Activated T-helper 1 cell treated with anti-CD3 and anti-CD28 coated beads, Interleukin-12 subunit alpha, Interleukin-12 subunit beta, Interleukin-2, Interleukin-4 antibody, amounts not matched to agents 30 ng/mL and 10 ng/mL and 1 ng/mL, durations not matched to agents 14 hours and 24 hours and 36 hours (primary cell): ENCODE measurements at regions of chr11 and their contacts with region 1.

Region 1: DNA sequence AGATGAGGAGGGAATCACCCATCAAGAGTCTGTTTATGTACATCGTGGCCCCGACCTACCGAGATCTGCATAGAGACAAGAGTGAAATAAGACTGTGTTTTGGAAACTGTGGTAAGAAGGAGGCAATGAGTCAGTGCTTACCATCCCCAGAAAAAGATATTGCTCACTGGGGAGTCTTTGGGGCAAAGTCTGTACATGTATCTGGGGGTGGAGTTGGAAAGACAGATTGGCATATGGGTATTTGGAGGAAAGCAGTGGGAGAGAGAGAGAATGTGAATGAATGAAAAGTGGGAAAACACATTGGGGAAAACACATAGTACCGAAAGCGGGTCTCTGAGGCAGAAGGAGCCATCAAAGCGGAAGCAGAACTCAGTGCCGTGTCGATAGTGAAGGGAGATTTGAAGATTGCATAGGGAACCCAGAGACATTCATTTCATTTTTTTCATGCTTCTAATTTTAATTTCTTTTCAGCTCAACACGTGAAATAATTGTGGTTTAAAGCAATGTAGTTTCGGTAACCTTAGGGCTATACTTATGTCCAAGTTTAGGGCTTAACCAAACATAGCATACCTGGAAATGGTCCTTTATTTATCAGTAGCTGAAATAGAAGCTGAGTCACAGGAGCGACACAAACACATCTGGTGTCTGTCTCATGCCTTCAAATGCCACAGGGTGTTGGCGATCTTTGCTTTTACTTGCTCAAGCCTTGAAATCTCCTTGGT is 98.6 kb upstream of the CD44 start:
- DNase-seq: peak; percentile 70
- H3K4me3 Mint-ChIP-seq: peak overlapping the region; percentile 72
- H3K27ac Mint-ChIP-seq: peak overlapping the region; percentile 93
- H3K4me1 Mint-ChIP-seq: peaks cover 66% of the 10 kb centered on the region
- H3K27me3 Mint-ChIP-seq: peaks cover 2% of the 10 kb centered on the region

Region 2: GRCh38 chr11:34653826-34654490 is 386.4 kb before region 1 on chr11:
- intact Hi-C with region 1: loop called (anchors 1 kb)
- DNase-seq: no peak
- H3K4me3 Mint-ChIP-seq: no peak overlapping the region
- H3K27ac Mint-ChIP-seq: no peak overlapping the region
- H3K4me1 Mint-ChIP-seq: peaks cover 21% of the 10 kb centered on the region
- H3K27me3 Mint-ChIP-seq: peaks cover 66% of the 10 kb centered on the region

Region 3: DNA sequence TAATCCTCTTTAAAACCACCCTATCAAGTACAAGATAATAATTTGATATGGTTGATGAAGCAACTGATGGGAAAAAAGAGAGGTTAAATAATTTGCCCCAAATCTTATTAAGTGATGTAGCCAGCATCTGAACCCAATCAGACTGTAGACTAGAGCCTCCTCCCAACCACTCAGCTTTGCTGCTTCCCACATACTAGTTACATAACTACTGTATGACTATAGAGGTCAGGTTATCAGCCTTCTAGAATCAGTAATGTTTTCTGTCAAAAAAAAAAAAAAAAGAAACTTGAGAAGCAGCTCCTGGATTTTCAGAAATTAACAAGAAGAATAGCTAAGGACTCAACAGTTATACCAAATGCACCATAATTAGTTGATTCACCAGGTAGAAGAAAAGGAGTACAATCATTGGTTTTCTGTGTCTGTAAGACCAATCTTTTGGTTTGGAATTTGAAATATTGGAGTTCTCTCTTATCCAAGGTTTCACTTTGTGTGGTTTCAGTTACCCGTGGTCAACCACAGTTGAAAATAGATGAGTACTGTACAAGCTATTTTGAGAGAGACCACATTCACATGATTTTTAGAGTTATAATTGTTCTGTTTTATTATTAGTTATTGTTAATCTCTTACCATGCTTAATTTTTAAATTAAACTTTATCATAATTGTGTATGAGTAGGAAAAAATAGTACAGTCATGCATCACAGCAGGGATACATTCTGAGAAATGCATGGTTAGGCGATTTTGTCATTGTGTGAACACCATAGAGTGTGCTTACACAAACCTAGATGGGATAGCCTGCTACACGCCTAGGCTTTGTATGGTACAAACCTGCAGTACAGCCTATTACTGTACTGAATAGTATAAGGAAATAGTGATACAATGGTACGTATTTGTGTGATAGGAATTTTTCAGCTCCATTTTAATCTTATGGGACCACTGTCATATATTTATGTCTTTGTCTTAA is 51.8 kb before region 1 on chr11:
- intact Hi-C with region 1: no loop called
- DNase-seq: no peak
- H3K4me3 Mint-ChIP-seq: peak overlapping the region; percentile 33
- H3K27ac Mint-ChIP-seq: no peak overlapping the region
- H3K4me1 Mint-ChIP-seq: peaks cover 21% of the 10 kb centered on the region
- H3K27me3 Mint-ChIP-seq: no peaks in the 10 kb centered on the region

Region 4: DNA sequence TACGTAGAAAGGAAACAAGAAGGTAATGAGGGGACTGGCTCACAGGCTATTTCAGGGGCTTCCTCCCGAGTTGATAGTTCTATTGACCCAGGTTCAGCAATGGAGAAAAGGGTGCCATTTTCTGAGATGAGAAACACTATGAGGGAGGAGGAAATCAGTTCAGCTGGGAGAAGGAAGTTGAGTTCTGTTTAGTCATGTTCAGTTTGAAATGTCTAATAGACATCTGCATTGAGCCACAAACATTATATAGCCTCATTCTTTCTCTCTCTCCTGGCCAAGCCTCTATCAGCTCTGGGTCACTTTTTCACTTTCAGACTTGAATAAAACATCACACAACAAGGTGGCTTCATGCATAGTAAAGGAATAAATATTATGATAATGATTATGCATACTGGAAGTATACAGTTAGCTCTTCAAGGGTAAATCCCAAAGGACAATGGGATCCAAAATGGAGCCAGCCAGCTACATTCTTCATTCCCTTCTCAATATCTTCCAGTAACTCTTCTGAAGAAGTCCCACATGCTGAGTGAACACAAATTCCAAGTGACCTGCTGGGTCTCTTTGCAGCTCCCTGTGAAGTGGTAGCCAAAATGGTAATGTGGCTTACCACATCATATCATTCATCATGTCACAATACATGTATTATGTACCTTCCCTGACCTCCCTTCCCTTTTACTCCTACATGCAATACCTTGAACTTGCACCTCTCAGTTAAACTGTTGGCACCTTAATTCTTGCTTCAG is 17.7 kb after region 1 on chr11:
- intact Hi-C with region 1: loop called (anchors 1 kb)
- DNase-seq: no peak
- H3K4me3 Mint-ChIP-seq: peak overlapping the region; percentile 8
- H3K27ac Mint-ChIP-seq: no peak overlapping the region
- H3K4me1 Mint-ChIP-seq: peaks cover 30% of the 10 kb centered on the region
- H3K27me3 Mint-ChIP-seq: no peaks in the 10 kb centered on the region

Region 5: GRCh38 chr11:35082321-35083182 is 42.2 kb after region 1 on chr11:
- intact Hi-C with region 1: loop called (anchors 1 kb)
- DNase-seq: peak; percentile 85
- H3K4me3 Mint-ChIP-seq: peak overlapping the region; percentile 56
- H3K27ac Mint-ChIP-seq: peak overlapping the region; percentile 91
- H3K4me1 Mint-ChIP-seq: peaks cover 82% of the 10 kb centered on the region
- H3K27me3 Mint-ChIP-seq: no peaks in the 10 kb centered on the region

Region 6: DNA sequence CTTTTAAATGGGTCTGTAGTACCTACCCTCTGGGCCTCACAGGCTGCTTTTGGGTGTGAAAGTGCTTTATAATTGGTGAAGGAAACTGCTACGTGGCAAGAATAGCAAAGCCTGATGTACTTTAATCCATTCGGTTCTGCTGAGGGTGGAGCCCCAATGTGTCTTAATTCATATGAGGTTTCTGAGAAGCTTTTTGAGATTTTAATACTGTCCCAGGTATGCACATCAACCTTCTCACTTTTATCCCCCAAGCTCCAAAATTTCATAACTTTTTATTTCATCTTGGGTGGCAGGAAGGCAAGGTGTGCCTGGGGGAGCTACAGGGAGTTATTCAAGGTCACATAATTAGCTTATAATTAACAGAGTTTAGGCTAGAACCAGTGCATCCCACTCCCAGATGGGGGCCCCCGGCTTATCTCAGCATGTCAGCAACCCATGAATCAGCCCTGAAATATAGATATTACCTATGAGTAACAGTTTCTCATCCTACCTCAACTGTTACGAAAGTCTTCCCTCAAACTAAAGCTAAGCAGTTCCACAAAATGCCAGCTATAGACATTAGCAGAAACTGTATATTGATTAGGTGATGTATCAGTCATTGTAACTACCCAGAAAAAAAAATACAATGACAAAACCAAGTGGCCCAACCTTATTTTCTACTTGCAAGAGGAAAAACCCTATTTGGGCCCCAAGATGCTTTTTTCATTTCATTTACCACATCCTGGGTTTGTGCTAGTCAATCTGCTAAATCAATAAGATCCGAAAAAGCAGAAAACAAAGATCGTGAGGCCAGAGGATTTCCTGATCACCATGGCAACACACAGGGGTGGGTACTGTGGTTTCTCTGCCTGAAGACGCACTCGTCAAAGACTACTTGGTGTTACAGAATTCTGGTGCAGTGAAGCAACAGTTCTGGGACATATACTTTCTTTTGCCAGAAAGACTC is 125.3 kb after region 1 on chr11:
- intact Hi-C with region 1: loop called (anchors 1 kb)
- DNase-seq: peak; percentile 92
- H3K4me3 Mint-ChIP-seq: peak overlapping the region; percentile 63
- H3K27ac Mint-ChIP-seq: peak overlapping the region; percentile 97
- H3K4me1 Mint-ChIP-seq: peaks cover 100% of the 10 kb centered on the region
- H3K27me3 Mint-ChIP-seq: no peaks in the 10 kb centered on the region

Region 7: DNA sequence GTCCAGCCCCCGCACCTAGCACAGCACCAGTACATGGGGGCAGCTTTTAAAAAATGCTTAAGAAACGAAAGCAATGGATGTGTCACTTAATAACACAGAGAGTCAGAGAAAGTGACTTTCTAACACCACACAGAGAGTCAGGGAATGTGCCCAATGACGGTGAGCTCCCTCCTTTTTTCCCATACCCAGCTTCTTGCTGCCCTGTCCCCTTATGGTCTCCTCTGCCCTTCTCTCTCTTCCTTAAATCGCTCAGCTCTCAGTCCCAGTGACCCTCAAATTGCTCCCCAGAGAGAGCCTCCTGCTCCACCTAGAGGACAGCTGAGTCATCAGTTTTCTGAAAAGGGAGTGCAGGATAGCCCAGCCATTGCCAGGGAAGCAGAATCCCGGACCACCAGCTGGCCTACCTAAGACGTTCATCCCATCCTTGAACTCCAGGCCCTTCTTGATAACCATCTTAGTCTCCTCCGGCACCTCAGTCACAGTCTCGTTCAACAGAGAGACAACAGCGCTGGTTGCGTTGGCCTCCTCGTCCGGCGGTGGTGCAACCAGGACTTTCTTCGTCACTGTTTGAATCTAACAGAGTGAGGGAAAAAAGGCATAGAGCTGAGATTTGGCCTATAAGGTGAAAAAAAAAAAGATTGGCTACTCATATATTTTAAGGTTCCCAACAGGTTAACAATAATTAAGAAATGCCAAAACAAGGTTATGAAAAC is 265.4 kb after region 1 on chr11:
- intact Hi-C with region 1: loop called (anchors 1 kb)
- DNase-seq: no peak
- H3K4me3 Mint-ChIP-seq: no peak overlapping the region
- H3K27ac Mint-ChIP-seq: no peak overlapping the region
- H3K4me1 Mint-ChIP-seq: peaks cover 28% of the 10 kb centered on the region
- H3K27me3 Mint-ChIP-seq: peaks cover 4% of the 10 kb centered on the region